ENCODE measurements at regions of chr6 and their contacts with region 1.

Region 1: GRCh38 chr6:16761471-16762267 is 409 bp upstream of the ATXN1 start:
- DNase-seq: peak; percentile 61 to 85
- ATAC-seq: peak; percentile 68 to 75
- H3K4me3 ChIP-seq: peak overlapping the region; percentile 95
- H3K27ac ChIP-seq: peak overlapping the region; percentile 95 to 100
- H3K4me1 ChIP-seq: peaks cover 59% of the 10 kb centered on the region
- CTCF ChIP-seq: peak; percentile 33
- EP300 ChIP-seq: peak in 1 of 2 experiments; percentile 19; a peak in 1 of 5 replicates
- POLR2A ChIP-seq: no peak
- RAD21 ChIP-seq: peak; percentile 24 to 56; a peak in 4 of 5 replicates

Region 2: DNA sequence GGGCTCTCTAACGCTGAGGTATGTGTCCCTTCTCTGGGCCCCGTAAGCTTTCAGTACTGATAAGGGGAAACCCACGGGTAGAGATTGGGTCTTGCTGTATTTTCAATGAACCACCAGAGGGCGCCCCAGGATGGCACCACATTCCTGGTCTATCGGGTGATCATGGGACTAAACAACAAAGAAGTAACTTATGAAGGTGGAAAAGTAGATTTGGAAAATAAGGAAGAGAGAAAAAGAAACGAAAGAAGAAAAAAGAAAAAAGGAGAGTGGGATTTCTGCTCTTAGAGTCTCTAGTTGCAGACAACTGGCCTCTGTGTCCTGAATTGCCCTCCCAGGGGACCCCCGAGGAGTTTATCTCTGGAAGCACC is 429.5 kb before region 1 on chr6:
- CTCF ChIA-PET with region 1: interaction called, 19 read pairs
- POLR2A ChIA-PET with region 1: no interaction called
- DNase-seq: peak; percentile 59 to 69
- ATAC-seq: peak; percentile 82 to 91
- H3K4me3 ChIP-seq: no peak overlapping the region
- H3K27ac ChIP-seq: peak overlapping the region in 1 of 2 experiments; percentile 64; a peak in 1 of 6 replicates
- H3K4me1 ChIP-seq: peaks cover 38% of the 10 kb centered on the region
- CTCF ChIP-seq: peak; percentile 76
- EP300 ChIP-seq: no peak
- POLR2A ChIP-seq: no peak
- RAD21 ChIP-seq: peak; percentile 80

Region 3: DNA sequence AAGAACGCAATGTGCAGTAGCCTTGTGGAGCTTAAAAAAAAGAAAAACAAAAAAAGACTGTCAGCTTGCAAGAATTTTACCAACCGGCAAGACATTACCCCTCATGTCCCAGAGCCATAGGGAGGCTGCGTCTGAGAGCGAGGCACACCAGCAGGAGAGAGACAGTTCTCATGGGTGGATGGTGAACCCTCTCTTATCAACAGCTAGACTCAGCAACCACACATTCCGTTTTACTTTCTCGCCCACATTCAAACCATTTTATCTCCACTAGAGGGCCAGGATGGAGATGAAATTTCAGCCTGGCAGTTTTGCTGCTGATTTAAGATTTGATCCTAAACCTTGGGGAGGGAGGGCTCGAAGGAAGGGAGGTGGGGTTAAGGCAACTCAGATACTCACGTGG is 247.4 kb before region 1 on chr6:
- CTCF ChIA-PET with region 1: interaction called, 33 read pairs
- POLR2A ChIA-PET with region 1: interaction called, 3 read pairs
- DNase-seq: peak; percentile 40 to 48
- ATAC-seq: peak; percentile 64 to 71; a peak in 5 of 6 replicates
- H3K4me3 ChIP-seq: no peak overlapping the region
- H3K27ac ChIP-seq: no peak overlapping the region
- H3K4me1 ChIP-seq: no peaks in the 10 kb centered on the region; the same call in 2 of the 3 replicates
- CTCF ChIP-seq: peak; percentile 39
- EP300 ChIP-seq: no peak
- POLR2A ChIP-seq: no peak
- RAD21 ChIP-seq: peak; percentile 54

Region 4: GRCh38 chr6:16712931-16713484 is 48.7 kb before region 1 on chr6:
- CTCF ChIA-PET with region 1: interaction called, 23 read pairs
- POLR2A ChIA-PET with region 1: interaction called, 10 read pairs
- DNase-seq: peak in 1 of 2 experiments; percentile 74
- ATAC-seq: peak; percentile 79 to 83
- H3K4me3 ChIP-seq: peak overlapping the region; percentile 3; the same call in 2 of the 3 replicates
- H3K27ac ChIP-seq: peak overlapping the region; percentile 79 to 83
- H3K4me1 ChIP-seq: peaks cover 38% of the 10 kb centered on the region
- CTCF ChIP-seq: peak; percentile 39
- EP300 ChIP-seq: peak; percentile 14 to 32; a peak in 2 of 5 replicates
- POLR2A ChIP-seq: no peak
- RAD21 ChIP-seq: peak; percentile 22 to 32; a peak in 2 of 5 replicates

Region 5: DNA sequence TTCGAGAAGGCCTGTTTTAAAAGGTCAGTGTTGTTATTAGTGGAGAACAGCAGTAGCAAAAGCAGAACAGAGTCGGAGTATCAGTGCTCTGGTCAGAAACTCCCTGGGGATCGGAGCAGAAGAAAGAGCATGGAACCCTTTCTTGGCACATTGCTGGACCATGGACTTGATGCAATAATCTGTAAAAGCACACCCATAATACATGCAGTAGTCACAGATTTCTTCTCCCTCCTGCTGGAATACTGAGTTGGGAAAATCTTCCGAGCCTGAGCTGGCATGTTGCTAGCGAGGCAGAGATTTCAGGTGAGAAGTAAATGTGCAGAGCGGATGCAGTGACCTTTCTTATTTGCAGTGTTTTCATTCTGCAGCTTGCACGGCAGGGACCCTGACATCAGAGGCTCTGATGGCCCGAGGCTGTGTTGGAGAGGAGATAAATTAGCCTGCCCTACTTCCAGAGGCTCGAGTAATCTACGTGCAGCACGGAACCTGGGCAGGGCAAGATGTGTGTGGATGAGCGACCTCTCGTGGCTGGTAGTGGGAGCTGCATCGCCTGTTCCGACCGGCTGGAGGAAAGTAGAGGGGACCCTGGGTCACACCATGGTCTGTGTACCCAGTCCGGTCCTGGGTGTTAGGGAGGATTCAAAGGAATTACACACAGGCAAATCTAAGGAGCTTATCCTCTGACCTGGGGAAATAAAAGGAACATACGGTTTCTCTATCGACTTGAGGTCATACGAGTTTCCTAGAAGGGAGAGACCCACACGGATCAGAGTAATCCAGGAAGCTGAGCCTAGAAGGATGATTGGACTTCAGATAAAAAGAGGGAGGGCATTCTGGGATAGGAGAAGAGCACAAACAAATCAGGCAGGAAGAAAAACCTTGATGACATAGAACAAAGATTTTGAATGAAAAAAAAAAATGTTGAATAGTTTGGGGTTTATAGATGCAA is 203.2 kb after region 1 on chr6:
- CTCF ChIA-PET with region 1: interaction called, 25 read pairs
- POLR2A ChIA-PET with region 1: no interaction called
- DNase-seq: peak; percentile 39 to 59
- ATAC-seq: peak; percentile 94 to 99; a peak in 5 of 6 replicates
- H3K4me3 ChIP-seq: no peak overlapping the region
- H3K27ac ChIP-seq: no peak overlapping the region
- H3K4me1 ChIP-seq: no peaks in the 10 kb centered on the region
- CTCF ChIP-seq: peak; percentile 66
- EP300 ChIP-seq: no peak
- POLR2A ChIP-seq: no peak
- RAD21 ChIP-seq: peak; percentile 74 to 77

Region 6: DNA sequence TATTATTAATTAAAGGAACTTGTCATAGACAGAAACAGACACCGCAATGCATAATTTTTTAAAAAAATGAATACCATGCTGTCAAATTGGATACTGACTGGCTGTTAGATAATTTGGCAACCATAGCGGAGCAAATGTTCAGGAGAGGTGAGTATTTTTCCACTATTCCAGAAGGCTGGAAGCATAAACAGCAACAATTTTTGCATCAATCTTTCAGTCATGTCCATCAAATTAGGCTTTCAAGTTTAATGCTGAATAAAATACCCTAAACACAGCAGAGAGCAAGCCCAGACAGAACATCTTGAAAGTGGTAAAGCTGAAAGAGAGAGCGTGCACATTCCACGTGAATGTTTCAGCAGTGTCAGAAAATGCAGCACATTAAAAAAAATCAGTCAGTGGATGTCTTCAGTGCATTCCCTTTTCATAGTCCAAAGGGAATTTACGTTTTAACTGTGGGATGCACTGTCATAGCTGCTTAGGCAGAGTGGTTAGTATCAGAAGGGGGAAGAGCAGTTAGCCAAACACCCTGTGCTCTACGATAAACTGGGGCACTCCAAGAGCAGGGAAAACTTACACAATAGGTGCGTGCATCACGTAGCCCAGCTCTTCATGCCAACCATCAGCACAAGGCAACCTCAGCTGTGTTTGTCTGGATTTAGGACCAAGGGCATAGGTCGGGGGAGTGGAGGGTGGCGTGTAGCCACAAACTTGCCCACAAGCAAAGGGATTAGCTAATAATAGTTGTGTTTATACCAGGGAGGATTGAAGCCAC is 224.0 kb after region 1 on chr6:
- CTCF ChIA-PET with region 1: no interaction called
- POLR2A ChIA-PET with region 1: no interaction called
- DNase-seq: no peak
- ATAC-seq: no peak
- H3K4me3 ChIP-seq: no peak overlapping the region
- H3K27ac ChIP-seq: no peak overlapping the region
- H3K4me1 ChIP-seq: no peaks in the 10 kb centered on the region
- CTCF ChIP-seq: no peak
- EP300 ChIP-seq: no peak
- POLR2A ChIP-seq: no peak
- RAD21 ChIP-seq: no peak